Left cardiac atrium (tissue), 4 donors: ENCODE measurements at regions of chr18 and their contacts with region 1.

Region 1: GRCh38 chr18:22494771-22495170 is 77.1 kb upstream of the CTAGE1 start:
- DNase-seq: no peak
- ATAC-seq: peak; percentile 63 to 91

Region 2: DNA sequence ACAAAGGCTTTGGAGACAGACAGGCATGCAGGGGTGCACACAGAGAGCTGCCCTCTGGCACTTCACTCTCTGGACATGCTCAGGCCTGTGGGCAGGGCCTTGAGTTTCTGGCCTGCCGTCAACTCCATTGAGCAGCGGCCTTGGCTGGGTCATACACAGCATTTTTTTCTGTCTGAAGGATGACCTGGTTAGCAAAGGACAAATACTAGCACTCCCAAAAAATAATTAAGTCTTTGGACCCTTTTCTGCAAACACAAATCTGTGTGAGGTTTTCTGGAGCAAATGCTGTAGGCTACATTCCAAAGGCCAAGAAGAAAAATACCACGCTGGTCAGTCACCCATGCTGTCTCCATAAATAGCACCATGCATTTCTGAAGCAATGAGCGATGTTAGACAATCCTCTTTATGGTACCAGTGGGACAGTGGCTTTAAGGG is 47.6 kb after region 1 on chr18:
- intact Hi-C with region 1: loop called in 1 of 2 experiments (anchors 10 kb)
- DNase-seq: no peak
- ATAC-seq: peak; percentile 67 to 78